Gastrocnemius medialis (tissue), 4 donors: ENCODE measurements at regions of chr13 and their contacts with region 1.

Region 1: GRCh38 chr13:111281751-111282311 is 38.6 kb upstream of the TEX29 start:
- DNase-seq: no peak
- ATAC-seq: peak; percentile 32 to 55
- H3K4me3 ChIP-seq: no peak overlapping the region
- H3K27ac ChIP-seq: peak overlapping the region; percentile 78 to 86 (median 82)
- H3K4me1 ChIP-seq: peaks cover 29 to 36% of the 10 kb centered on the region in 2 donors
- H3K27me3 ChIP-seq: no peaks in the 10 kb centered on the region
- CTCF ChIP-seq: no peak
- POLR2A ChIP-seq: no peak

Region 2: DNA sequence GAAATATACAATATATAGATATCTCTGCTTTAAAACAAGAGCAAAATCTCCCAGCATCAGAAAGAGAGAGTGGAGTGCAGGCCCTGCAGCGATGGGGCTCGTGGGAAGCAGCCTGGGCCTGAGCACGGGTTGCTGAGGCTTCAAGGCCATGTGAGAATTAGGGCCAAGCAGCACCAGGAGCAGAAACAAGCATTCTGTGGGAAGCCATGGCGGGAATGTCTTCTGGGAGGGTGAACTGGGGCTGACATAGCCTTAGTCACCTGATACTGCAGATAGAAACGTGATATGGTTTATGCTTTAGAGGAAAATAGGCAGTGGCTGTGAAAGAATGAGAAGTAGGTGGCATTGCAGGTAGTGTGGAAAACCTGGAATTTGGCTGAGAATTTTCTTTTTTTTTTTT is 1967.7 kb before region 1 on chr13:
- in situ Hi-C with region 1: no loop called
- intact Hi-C with region 1: no loop called
- DNase-seq: no peak
- ATAC-seq: no peak
- H3K4me3 ChIP-seq: no peak overlapping the region
- H3K27ac ChIP-seq: no peak overlapping the region
- H3K4me1 ChIP-seq: no peaks in the 10 kb centered on the region
- H3K27me3 ChIP-seq: no peaks in the 10 kb centered on the region
- CTCF ChIP-seq: no peak
- POLR2A ChIP-seq: no peak

Region 3: DNA sequence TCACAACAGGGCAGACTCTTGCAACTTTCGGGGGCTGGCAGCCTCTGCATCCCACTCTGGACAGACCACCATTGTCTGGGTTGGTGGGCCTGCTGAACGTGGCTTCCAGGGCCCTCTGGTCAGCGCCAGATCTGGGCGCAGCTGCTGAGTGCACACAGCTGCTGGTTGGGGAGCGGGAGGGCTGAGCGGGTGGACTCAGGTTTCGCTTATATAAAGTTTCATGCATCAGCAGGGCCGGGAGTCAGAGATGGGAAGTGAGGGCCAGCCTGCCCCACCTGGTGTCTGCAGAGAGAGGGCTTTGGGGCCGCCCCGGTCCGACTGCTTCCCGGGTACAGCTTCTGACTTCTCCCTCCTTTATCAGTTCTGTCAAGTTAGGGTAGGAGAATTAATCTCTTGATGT is 159.8 kb before region 1 on chr13:
- in situ Hi-C with region 1: no loop called
- intact Hi-C with region 1: loop called (anchors 5 kb)
- DNase-seq: peak; percentile 51 to 87
- ATAC-seq: peak; percentile 89 to 96
- H3K4me3 ChIP-seq: peak overlapping the region in 2 of 4 donors; percentile 4 to 26
- H3K27ac ChIP-seq: peak overlapping the region; percentile 73 to 82 (median 79)
- H3K4me1 ChIP-seq: peaks cover 2 to 23% of the 10 kb centered on the region in 2 donors
- H3K27me3 ChIP-seq: peaks cover 0 to 1% (median 0%) of the 10 kb centered on the region in 3 donors
- CTCF ChIP-seq: peak in 4 of 5 experiments; percentile 19 to 46 (median 24)
- POLR2A ChIP-seq: peak; percentile 35 to 40

Region 4: GRCh38 chr13:111228262-111229144 is 53.3 kb before region 1 on chr13:
- in situ Hi-C with region 1: no loop called
- intact Hi-C with region 1: loop called (anchors 5 kb)
- DNase-seq: no peak
- ATAC-seq: peak; percentile 56 to 58
- H3K4me3 ChIP-seq: peak overlapping the region in 1 of 4 donors; percentile 10
- H3K27ac ChIP-seq: peak overlapping the region; percentile 33 to 57 (median 50)
- H3K4me1 ChIP-seq: peaks cover 46 to 73% of the 10 kb centered on the region in 2 donors
- H3K27me3 ChIP-seq: no peaks in the 10 kb centered on the region
- CTCF ChIP-seq: no peak
- POLR2A ChIP-seq: no peak

Region 5: DNA sequence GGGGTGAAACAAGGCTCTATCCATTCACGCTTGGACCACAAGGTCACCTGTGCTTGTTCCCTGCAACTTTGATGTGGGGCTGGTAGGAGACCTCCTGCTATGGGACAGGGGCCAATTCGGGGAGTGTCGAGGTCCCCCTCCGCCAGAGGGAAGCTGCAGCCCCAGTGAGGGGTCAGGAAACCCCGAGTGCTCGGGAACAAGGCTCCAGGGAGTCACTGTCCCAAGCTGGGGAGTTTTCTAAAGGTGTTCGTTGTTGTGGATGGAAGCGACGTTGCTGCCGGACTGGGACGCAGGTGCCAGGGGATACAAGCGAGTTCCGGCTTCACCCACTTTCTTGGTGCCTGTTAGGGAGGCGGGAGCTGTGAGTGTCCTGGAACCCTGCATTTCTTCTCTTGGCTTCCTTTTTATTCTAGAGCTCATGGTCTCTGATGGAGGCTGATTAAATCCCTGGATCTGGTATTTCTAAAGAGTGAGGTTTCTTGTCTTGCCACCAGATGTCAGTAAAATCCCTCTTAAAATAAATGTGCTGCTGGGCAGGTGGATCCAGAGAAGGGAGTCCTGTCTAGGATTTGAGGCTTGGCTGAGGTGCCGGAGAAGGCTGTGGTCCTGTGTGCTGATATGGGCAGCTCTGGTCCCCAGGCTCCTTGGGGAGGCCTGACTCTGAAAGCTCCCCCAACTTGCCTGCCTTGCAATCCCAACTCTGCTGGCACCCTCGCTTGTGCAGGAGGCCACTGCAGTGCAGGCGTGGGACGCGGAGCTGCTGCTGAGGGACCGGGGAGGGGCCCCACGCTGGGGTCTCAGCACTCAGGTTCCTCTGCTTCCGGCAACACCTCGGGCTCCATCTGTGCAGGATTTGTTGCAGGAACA is 192.5 kb after region 1 on chr13:
- in situ Hi-C with region 1: no loop called
- intact Hi-C with region 1: no loop called
- DNase-seq: no peak
- ATAC-seq: peak in 1 of 2 donors; percentile 45
- H3K4me3 ChIP-seq: no peak overlapping the region
- H3K27ac ChIP-seq: no peak overlapping the region
- H3K4me1 ChIP-seq: no peaks in the 10 kb centered on the region
- H3K27me3 ChIP-seq: peaks cover 0 to 8% (median 0%) of the 10 kb centered on the region in 3 donors
- CTCF ChIP-seq: peak in 4 of 5 experiments; percentile 33 to 52 (median 36)
- POLR2A ChIP-seq: no peak